ENCODE measurements at regions of chr12 and their contacts with region 1.

Region 1: GRCh38 chr12:116277393-116278278 is at the start of gene MED13L:
- DNase-seq: peak; percentile 57
- ATAC-seq: peak; percentile 88
- H3K4me3 ChIP-seq: peak within 1 kb of the TSS; percentile 63 to 89
- H3K27ac ChIP-seq: peak within 1 kb of the TSS; percentile 87
- H3K4me1 ChIP-seq: peaks cover 21 to 43% of the 10 kb centered on the region in 2 experiments
- H3K27me3 ChIP-seq: no peaks in the 10 kb centered on the region
- CTCF ChIP-seq: peak in 1 of 3 experiments; percentile 24; a peak in 2 of 6 replicates
- POLR2A ChIP-seq: no peak
- RAD21 ChIP-seq: peak; percentile 65
- total RNA-seq, gene MED13L: 176 TPM

Region 2: GRCh38 chr12:116026768-116027550 is 250.7 kb before region 1 on chr12:
- CTCF ChIA-PET with region 1: no interaction called
- POLR2A ChIA-PET with region 1: no interaction called
- RAD21 ChIA-PET with region 1: interaction called in 1 of 2 experiments, 10 read pairs
- intact Hi-C with region 1: no loop called
- DNase-seq: no peak
- ATAC-seq: peak; percentile 59
- H3K4me3 ChIP-seq: no peak overlapping the region
- H3K27ac ChIP-seq: no peak overlapping the region
- H3K4me1 ChIP-seq: peaks cover 11 to 12% of the 10 kb centered on the region in 2 experiments; a peak in 3 of 4 replicates
- H3K27me3 ChIP-seq: no peaks in the 10 kb centered on the region
- CTCF ChIP-seq: no peak
- POLR2A ChIP-seq: no peak
- RAD21 ChIP-seq: no peak

Region 3: GRCh38 chr12:116336542-116337065 is 59.0 kb after region 1 on chr12:
- CTCF ChIA-PET with region 1: no interaction called
- POLR2A ChIA-PET with region 1: no interaction called
- RAD21 ChIA-PET with region 1: no interaction called
- intact Hi-C with region 1: no loop called
- DNase-seq: no peak
- ATAC-seq: no peak; the same call in 1 of the 2 replicates
- H3K4me3 ChIP-seq: no peak overlapping the region
- H3K27ac ChIP-seq: no peak overlapping the region
- H3K4me1 ChIP-seq: peaks cover 0 to 14% of the 10 kb centered on the region in 2 experiments; a peak in 3 of 4 replicates
- H3K27me3 ChIP-seq: no peaks in the 10 kb centered on the region
- CTCF ChIP-seq: no peak
- POLR2A ChIP-seq: no peak
- RAD21 ChIP-seq: no peak

Region 4: DNA sequence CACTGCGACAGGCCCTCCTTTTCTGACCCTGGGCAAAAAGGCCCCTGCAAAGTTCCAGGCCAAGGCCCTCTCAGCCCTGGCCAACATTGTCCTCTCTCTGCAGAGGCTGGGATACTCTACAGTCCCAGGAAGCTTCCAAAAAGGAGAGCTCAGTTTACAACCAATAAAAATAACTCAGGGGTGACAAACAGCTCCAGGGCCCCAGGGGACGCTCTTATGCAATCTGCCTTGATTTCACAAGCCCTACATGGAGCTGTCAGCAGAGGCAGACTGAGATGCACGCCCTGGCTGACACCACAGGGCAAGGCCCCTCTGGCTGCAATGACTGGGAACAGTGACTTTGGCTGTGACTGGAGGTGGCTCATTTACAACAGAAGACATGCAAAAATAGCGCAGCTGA is 128.9 kb after region 1 on chr12:
- CTCF ChIA-PET with region 1: no interaction called
- POLR2A ChIA-PET with region 1: no interaction called
- RAD21 ChIA-PET with region 1: no interaction called
- intact Hi-C with region 1: loop called (anchors 5 kb)
- DNase-seq: peak; percentile 83
- ATAC-seq: peak; percentile 94
- H3K4me3 ChIP-seq: no peak overlapping the region
- H3K27ac ChIP-seq: peak overlapping the region; percentile 13; the same call in 1 of the 2 replicates
- H3K4me1 ChIP-seq: peaks cover 17 to 34% of the 10 kb centered on the region in 2 experiments
- H3K27me3 ChIP-seq: no peaks in the 10 kb centered on the region
- CTCF ChIP-seq: peak in 2 of 3 experiments; percentile 13 to 47; a peak in 2 of 6 replicates
- POLR2A ChIP-seq: no peak
- RAD21 ChIP-seq: peak; percentile 75

Region 5: DNA sequence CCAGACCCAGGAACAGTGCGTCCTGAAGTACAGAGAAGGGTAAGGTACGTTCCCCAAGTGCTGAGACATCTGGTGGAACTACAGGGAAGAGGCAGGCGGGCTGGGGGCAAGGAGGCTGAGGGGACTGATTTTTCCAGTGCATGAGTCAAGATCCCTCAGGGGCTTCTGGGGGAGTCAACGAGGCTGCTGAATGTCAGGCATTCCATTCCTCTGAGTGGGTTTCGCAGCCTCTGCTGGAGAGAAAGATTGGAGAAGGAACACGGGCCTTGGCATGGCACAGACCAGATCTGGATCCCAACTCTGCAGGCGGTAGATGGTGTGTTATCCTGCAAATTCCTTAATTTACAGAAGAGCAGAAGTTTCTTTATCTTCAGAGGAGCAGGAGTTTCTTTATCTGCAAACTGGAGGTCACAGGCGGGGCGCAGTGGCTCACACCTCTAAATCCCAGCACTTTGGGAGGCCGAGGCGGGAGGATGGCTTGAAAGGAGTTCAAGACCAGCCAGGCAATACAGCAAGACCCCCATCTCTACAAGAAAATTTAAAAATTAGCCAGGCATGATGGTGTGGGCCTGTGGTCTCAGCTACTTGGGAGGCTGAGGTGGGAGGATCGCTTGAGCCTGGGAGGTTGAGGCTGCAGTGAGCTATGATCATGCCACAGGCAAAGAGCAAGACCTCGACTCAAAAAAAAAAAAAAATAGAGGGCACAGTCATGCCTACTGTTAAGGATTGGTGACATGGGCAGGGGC is 148.9 kb after region 1 on chr12:
- CTCF ChIA-PET with region 1: no interaction called
- POLR2A ChIA-PET with region 1: no interaction called
- RAD21 ChIA-PET with region 1: no interaction called
- intact Hi-C with region 1: loop called (anchors 2 kb)
- DNase-seq: peak; percentile 87
- ATAC-seq: peak; percentile 81
- H3K4me3 ChIP-seq: peak overlapping the region; percentile 33 to 46
- H3K27ac ChIP-seq: peak overlapping the region; percentile 83
- H3K4me1 ChIP-seq: peaks cover 27 to 53% of the 10 kb centered on the region in 2 experiments
- H3K27me3 ChIP-seq: no peaks in the 10 kb centered on the region
- CTCF ChIP-seq: peak in 2 of 3 experiments; percentile 48 to 50; a peak in 3 of 6 replicates
- POLR2A ChIP-seq: no peak
- RAD21 ChIP-seq: no peak

Region 6: GRCh38 chr12:116492703-116493324 is 215.2 kb after region 1 on chr12:
- CTCF ChIA-PET with region 1: no interaction called
- POLR2A ChIA-PET with region 1: no interaction called
- RAD21 ChIA-PET with region 1: no interaction called
- intact Hi-C with region 1: loop called (anchors 5 kb)
- DNase-seq: peak; percentile 79
- ATAC-seq: peak; percentile 7; the same call in 1 of the 2 replicates
- H3K4me3 ChIP-seq: peak overlapping the region in 1 of 2 experiments; percentile 9; a peak in 1 of 4 replicates
- H3K27ac ChIP-seq: peak overlapping the region; percentile 99
- H3K4me1 ChIP-seq: peaks cover 53 to 70% of the 10 kb centered on the region in 2 experiments
- H3K27me3 ChIP-seq: no peaks in the 10 kb centered on the region
- CTCF ChIP-seq: no peak
- POLR2A ChIP-seq: no peak
- RAD21 ChIP-seq: 0 out of 2 replicates have a peak, but pooled peaks have one; percentile 7

Region 7: GRCh38 chr12:116599285-116600136 is 321.9 kb after region 1 on chr12:
- CTCF ChIA-PET with region 1: no interaction called
- POLR2A ChIA-PET with region 1: no interaction called
- RAD21 ChIA-PET with region 1: no interaction called
- intact Hi-C with region 1: loop called (anchors 2 kb)
- DNase-seq: peak; percentile 26
- ATAC-seq: peak; percentile 90
- H3K4me3 ChIP-seq: no peak overlapping the region
- H3K27ac ChIP-seq: peak overlapping the region; percentile 23; the same call in 1 of the 2 replicates
- H3K4me1 ChIP-seq: peaks cover 20 to 48% of the 10 kb centered on the region in 2 experiments
- H3K27me3 ChIP-seq: no peaks in the 10 kb centered on the region
- CTCF ChIP-seq: peak; percentile 30 to 75 (median 56); a peak in 4 of 6 replicates
- POLR2A ChIP-seq: no peak
- RAD21 ChIP-seq: peak; percentile 72

Region 8: DNA sequence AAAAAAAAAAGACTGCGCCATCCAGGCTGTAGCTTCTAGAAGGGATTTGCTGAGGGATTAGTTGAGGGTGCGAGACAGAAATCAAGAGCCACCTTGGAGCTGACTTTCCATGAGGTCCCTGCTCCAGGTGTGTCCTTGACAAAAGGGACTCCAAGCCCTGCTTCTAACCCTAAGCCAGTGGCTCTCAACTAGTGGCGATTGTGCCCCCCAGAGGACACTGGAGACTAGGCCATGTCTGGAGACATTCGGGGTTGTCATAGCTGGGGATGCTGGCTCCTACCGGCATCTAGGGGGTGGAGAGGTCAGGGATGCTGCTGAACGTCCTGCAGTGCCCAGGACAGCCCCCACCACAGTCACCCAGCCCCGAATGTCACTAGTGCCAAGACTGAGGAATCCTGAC is 419.7 kb after region 1 on chr12:
- CTCF ChIA-PET with region 1: no interaction called
- POLR2A ChIA-PET with region 1: no interaction called
- RAD21 ChIA-PET with region 1: no interaction called
- intact Hi-C with region 1: loop called (anchors 10 kb)
- DNase-seq: peak; percentile 40
- ATAC-seq: peak; percentile 97
- H3K4me3 ChIP-seq: no peak overlapping the region
- H3K27ac ChIP-seq: no peak overlapping the region
- H3K4me1 ChIP-seq: no peaks in the 10 kb centered on the region
- H3K27me3 ChIP-seq: no peaks in the 10 kb centered on the region
- CTCF ChIP-seq: peak; percentile 67 to 73 (median 70)
- POLR2A ChIP-seq: no peak
- RAD21 ChIP-seq: peak; percentile 89

Measured in HCT116 (cell line).